ENCODE measurements at regions of chr3 and their contacts with region 1.

Region 1: GRCh38 chr3:113013593-113013992 is 22.8 kb downstream of the GTPBP8 start:
- DNase-seq: no peak
- ATAC-seq: no peak
- H3K4me3 Mint-ChIP-seq: no peak overlapping the region
- H3K27ac Mint-ChIP-seq: no peak overlapping the region
- H3K4me1 Mint-ChIP-seq: peaks cover 38% of the 10 kb centered on the region
- H3K27me3 Mint-ChIP-seq: no peaks in the 10 kb centered on the region

Region 2: GRCh38 chr3:112973325-112974177 is 40.0 kb before region 1 on chr3:
- CTCF ChIA-PET with region 1: interaction called, 3 read pairs
- POLR2A ChIA-PET with region 1: interaction called, 11 read pairs
- DNase-seq: peak; percentile 60
- ATAC-seq: peak; percentile 89
- H3K4me3 Mint-ChIP-seq: peak overlapping the region; percentile 79
- H3K27ac Mint-ChIP-seq: peak overlapping the region; percentile 84
- H3K4me1 Mint-ChIP-seq: peaks cover 53% of the 10 kb centered on the region
- H3K27me3 Mint-ChIP-seq: no peaks in the 10 kb centered on the region

Measured in activated CD8-positive, alpha-beta T cell treated with anti-CD3 and anti-CD28 coated beads, Interleukin-2, amount 10 ng/mL, durations not matched to agents 7 days and 5 days (primary cell).